ENCODE measurements at regions of chr2 and their contacts with region 1.

Region 1: GRCh38 chr2:201642579-201643215 is 606 bp downstream of the TMEM237 start:
- DNase-seq: peak; percentile 81 to 94 (median 92)
- ATAC-seq: peak; percentile 94
- H3K4me3 ChIP-seq: peak overlapping the region; percentile 95
- H3K4me3 Mint-ChIP-seq: peak overlapping the region; percentile 86 to 99 (median 96)
- H3K27ac ChIP-seq: peak overlapping the region; percentile 87
- H3K27ac Mint-ChIP-seq: peak overlapping the region; percentile 76 to 100 (median 97)
- H3K4me1 ChIP-seq: peaks cover 3 to 5% of the 10 kb centered on the region in 2 donors
- H3K4me1 Mint-ChIP-seq: peaks cover 5 to 21% (median 12%) of the 10 kb centered on the region in 7 donors
- H3K27me3 ChIP-seq: no peaks in the 10 kb centered on the region
- H3K27me3 Mint-ChIP-seq: peaks cover 0 to 4% (median 0%) of the 10 kb centered on the region in 5 donors

Region 2: DNA sequence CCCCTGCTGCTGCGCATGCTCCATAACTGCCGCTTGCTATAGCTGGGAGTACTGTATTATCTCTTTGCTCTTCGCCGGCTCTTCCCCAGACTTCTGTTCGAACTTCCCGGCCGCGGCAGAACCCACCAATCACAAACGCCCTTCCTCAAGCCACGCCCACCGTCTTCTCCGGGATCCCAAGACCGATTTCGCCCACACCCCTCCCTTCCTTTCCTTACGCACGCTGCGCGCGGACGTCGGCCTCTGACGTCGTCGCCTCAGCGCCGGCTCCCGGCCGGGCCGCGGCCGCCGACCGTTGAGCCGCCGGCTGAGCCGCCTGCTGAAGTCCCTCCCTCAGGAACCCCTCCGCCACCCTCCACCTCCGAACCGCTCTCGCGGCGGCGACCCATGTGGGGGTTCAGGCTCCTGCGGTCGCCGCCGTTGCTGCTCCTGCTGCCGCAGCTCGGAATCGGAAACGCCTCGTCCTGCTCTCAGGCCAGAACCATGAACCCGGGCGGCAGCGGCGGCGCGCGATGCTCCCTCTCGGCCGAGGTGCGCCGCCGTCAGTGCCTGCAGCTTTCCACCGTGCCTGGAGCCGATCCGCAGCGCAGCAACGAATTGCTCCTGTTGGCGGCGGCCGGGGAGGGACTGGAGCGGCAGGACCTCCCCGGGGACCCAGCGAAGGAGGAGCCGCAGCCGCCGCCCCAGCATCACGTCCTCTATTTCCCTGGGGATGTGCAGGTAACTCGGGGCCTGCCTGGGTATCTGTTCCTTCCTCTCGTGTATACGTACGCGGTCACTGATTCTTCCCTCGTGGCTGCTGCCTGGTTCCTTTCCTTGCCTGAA is 1731.4 kb before region 1 on chr2 and contains the start of gene C2orf69:
- CTCF ChIA-PET with region 1: no interaction called
- POLR2A ChIA-PET with region 1: no interaction called
- intact Hi-C with region 1: loop called in 1 of 2 experiments (anchors 10 kb)
- DNase-seq: peak; percentile 80 to 92 (median 83)
- ATAC-seq: peak; percentile 93
- H3K4me3 ChIP-seq: peak within 1 kb of the TSS; percentile 75
- H3K4me3 Mint-ChIP-seq: peak within 1 kb of the TSS; percentile 89 to 100 (median 98)
- H3K27ac ChIP-seq: peak within 1 kb of the TSS; percentile 89
- H3K27ac Mint-ChIP-seq: peak within 1 kb of the TSS; percentile 72 to 95 (median 94)
- H3K4me1 ChIP-seq: peaks cover 11 to 19% of the 10 kb centered on the region in 2 donors
- H3K4me1 Mint-ChIP-seq: peaks cover 26 to 47% (median 37%) of the 10 kb centered on the region in 7 donors
- H3K27me3 ChIP-seq: no peaks in the 10 kb centered on the region
- H3K27me3 Mint-ChIP-seq: peaks cover 0 to 14% (median 8%) of the 10 kb centered on the region in 5 donors
- total RNA-seq, gene C2orf69: 10.1 to 15.4 (median 12.7) TPM

Region 3: DNA sequence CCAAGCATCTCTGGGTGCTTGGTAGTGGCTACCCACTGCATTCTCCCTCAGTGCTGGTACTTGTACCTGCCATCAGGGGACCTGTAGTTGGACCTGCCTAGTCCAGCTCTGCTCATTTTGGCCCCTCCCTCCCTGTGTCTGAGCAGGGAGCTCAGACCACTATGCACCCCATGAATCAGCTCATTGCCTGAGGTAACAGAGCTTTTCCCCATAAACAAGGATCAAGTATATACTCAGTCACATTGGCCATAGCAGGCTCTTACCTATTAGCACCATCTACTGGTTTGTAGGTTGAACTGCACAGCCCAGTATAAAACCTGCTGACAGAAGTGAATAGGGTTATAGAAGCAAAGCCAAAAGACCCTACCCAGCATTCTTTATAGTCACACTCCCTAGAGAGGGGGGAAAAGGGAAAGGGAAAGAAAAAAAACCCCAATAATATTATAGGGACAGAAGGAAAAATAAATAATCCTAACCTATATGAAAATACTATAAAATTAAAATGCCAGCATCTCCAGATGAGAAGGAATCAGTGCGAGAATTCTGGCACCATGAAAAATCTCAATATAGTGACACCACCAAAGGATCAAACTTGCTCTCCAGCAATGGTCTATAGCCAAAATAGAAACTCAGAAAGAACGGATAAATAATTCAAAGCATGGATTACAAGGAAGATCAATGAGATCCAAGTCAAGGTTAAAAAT is 278.7 kb before region 1 on chr2:
- CTCF ChIA-PET with region 1: no interaction called
- POLR2A ChIA-PET with region 1: no interaction called
- intact Hi-C with region 1: loop called in 1 of 2 experiments (anchors 5 kb)
- DNase-seq: peak in 7 of 9 donors; percentile 21 to 64 (median 61)
- ATAC-seq: peak; percentile 96
- H3K4me3 ChIP-seq: no peak overlapping the region
- H3K4me3 Mint-ChIP-seq: peak overlapping the region in 5 of 10 donors; percentile 11 to 49 (median 32)
- H3K27ac ChIP-seq: no peak overlapping the region
- H3K27ac Mint-ChIP-seq: peak overlapping the region in 7 of 9 donors; percentile 9 to 84 (median 75)
- H3K4me1 ChIP-seq: peaks cover 0 to 24% of the 10 kb centered on the region in 2 donors
- H3K4me1 Mint-ChIP-seq: peaks cover 11 to 45% (median 41%) of the 10 kb centered on the region in 7 donors
- H3K27me3 ChIP-seq: no peaks in the 10 kb centered on the region
- H3K27me3 Mint-ChIP-seq: no peaks in the 10 kb centered on the region

Region 4: DNA sequence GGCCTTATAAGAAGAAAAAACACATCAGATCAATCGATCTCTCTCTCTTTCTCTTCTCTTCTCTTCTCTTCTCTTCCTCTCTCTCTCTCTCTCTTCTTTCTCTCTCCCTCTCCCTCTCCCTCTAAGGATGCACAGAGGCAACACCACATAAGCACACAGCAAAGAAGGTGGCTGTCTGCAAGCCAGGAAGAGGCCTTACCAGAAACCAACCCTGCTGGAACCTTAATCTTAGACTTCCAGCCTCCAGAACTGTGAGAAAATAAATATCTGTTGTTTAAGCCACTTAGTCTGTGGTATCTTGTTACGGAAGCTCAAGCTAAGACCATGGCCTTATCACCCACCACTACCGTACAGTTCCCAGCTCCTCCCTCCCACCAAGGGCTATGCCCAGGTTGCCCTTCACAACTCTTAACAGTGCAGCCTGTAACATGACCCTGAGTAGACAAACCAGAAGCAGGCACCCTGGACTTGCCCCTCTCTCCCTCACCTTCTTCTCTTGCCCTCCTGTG is 25.8 kb after region 1 on chr2:
- CTCF ChIA-PET with region 1: no interaction called
- POLR2A ChIA-PET with region 1: no interaction called
- intact Hi-C with region 1: no loop called
- DNase-seq: no peak
- ATAC-seq: no peak
- H3K4me3 ChIP-seq: no peak overlapping the region
- H3K4me3 Mint-ChIP-seq: no peak overlapping the region
- H3K27ac ChIP-seq: no peak overlapping the region
- H3K27ac Mint-ChIP-seq: peak overlapping the region in 1 of 9 donors; percentile 18
- H3K4me1 ChIP-seq: no peaks in the 10 kb centered on the region
- H3K4me1 Mint-ChIP-seq: no peaks in the 10 kb centered on the region
- H3K27me3 ChIP-seq: no peaks in the 10 kb centered on the region
- H3K27me3 Mint-ChIP-seq: peaks cover 0 to 27% (median 0%) of the 10 kb centered on the region in 5 donors

Region 5: DNA sequence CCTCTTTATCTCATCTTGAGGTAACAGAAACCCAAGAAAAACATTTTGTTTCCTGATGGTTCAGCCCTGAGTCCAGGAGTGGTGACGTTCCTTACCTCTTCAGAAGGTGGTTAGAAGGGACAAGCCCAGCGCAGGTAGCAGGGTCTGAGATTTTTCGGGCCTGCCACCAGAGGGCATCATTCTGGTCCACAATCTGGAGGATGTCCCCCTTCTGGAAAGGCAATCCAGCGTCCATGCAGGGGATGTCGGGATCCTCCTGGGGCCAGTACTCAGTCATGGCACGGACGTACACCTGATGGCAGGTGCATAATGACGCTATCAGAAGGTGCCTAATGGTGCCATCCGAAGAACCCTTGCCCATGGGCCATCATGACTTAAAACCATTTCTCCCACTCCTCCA is 38.0 kb after region 1 on chr2:
- CTCF ChIA-PET with region 1: no interaction called
- POLR2A ChIA-PET with region 1: no interaction called
- intact Hi-C with region 1: no loop called
- DNase-seq: no peak
- ATAC-seq: no peak
- H3K4me3 ChIP-seq: no peak overlapping the region
- H3K4me3 Mint-ChIP-seq: no peak overlapping the region
- H3K27ac ChIP-seq: no peak overlapping the region
- H3K27ac Mint-ChIP-seq: no peak overlapping the region
- H3K4me1 ChIP-seq: no peaks in the 10 kb centered on the region
- H3K4me1 Mint-ChIP-seq: no peaks in the 10 kb centered on the region
- H3K27me3 ChIP-seq: no peaks in the 10 kb centered on the region
- H3K27me3 Mint-ChIP-seq: peaks cover 4 to 15% (median 11%) of the 10 kb centered on the region in 5 donors

Region 6: DNA sequence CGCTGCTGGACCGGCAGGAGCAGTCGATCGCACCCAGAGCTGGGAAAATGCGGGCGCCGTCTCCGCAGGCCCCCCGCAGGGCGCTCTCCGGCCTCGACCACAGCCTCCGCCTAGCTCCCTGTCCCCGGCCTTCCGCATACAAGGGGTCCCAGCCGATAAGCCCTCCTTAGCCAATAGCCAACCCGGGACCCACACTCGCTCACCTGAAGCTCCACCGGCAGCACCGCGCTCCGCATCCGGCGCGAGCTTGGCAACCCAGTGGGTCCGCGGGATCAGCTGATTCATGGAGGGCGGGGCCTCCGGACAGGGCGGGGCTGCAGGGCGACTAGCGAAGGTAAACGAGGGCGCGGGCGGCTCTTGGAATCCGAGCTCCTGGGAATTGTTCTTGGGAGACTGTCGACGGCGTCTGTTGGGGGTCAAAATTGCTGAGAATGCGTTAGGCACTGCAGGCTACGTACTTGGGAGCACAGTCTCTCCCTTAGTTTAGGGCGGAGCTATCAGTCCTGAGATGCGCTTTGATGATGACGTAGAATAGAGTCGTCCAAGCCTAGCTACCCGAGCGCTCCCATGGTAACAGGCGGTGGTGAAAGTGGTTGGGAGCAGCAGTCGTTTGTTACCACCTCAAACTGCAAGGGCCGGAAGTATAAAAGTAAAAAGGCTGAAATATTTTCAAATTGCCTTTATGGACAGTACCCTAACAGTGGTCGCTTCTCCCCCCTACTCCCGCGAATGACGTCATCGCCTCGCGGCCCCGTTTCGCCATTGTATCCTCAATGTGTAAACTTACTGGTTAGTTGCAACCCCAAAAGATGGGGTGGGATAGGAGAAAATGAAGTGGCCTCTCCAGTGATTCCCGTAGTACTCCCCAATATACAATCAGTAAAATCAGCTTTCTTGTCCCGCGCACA is 138.2 kb after region 1 on chr2 and contains the start of gene ALS2:
- CTCF ChIA-PET with region 1: no interaction called
- POLR2A ChIA-PET with region 1: interaction called, 6 read pairs
- intact Hi-C with region 1: loop called (anchors 1 kb)
- DNase-seq: peak; percentile 91 to 97 (median 95)
- ATAC-seq: peak; percentile 96
- H3K4me3 ChIP-seq: peak within 1 kb of the TSS; percentile 96
- H3K4me3 Mint-ChIP-seq: peak within 1 kb of the TSS; percentile 87 to 99 (median 98)
- H3K27ac ChIP-seq: peak within 1 kb of the TSS; percentile 84
- H3K27ac Mint-ChIP-seq: peak within 1 kb of the TSS; percentile 84 to 99 (median 97)
- H3K4me1 ChIP-seq: peaks cover 7 to 10% of the 10 kb centered on the region in 2 donors
- H3K4me1 Mint-ChIP-seq: peaks cover 5 to 36% (median 21%) of the 10 kb centered on the region in 7 donors
- H3K27me3 ChIP-seq: no peaks in the 10 kb centered on the region
- H3K27me3 Mint-ChIP-seq: peaks cover 0 to 22% (median 0%) of the 10 kb centered on the region in 5 donors
- total RNA-seq, gene ALS2: 8.9 to 13.5 (median 10.7) TPM

Region 7: DNA sequence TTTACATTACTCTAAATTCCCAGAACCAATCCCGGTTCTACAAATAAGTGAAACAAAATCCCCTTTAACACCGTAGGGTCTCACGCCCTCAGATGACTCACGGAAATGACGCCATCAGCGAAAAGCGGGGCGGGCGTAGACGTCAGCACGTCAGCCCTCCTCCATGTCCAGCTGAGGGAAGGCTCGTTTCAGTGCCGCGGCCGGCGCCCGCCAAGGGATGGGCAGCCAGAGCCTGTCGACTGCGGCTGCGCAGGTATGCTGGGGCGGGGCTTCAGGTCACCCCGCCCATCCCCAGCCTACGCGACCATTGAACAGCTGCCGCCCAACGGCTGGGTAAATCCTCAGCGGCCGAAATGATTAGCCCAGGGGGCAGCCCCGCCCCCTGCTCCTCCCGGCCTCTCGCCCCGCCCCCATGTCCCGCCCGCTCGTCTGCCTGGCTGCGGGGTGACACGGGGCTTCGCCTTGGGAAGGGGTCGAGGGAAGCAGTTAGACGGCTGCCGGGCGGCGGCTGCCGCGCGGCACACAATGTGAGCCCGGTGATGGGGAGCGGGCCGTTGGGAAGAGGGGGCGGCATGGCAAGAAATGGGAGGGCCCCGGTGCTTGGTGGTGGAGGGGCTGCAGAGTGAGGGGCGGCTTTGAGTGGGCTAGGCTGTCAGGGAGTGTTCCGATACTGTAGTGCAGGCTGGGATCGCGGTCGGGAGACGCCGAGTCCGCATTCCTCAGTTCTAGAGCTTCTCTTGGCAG is 1371.9 kb after region 1 on chr2 and contains the start of gene NBEAL1:
- CTCF ChIA-PET with region 1: no interaction called
- POLR2A ChIA-PET with region 1: no interaction called
- intact Hi-C with region 1: loop called (anchors 2 to 5 kb)
- DNase-seq: peak; percentile 88 to 99 (median 90)
- ATAC-seq: peak; percentile 95
- H3K4me3 ChIP-seq: peak within 1 kb of the TSS; percentile 92
- H3K4me3 Mint-ChIP-seq: peak within 1 kb of the TSS; percentile 90 to 97 (median 95)
- H3K27ac ChIP-seq: peak within 1 kb of the TSS; percentile 92
- H3K27ac Mint-ChIP-seq: peak within 1 kb of the TSS; percentile 84 to 98 (median 94)
- H3K4me1 ChIP-seq: peaks cover 5 to 14% of the 10 kb centered on the region in 2 donors
- H3K4me1 Mint-ChIP-seq: peaks cover 18 to 48% (median 41%) of the 10 kb centered on the region in 7 donors
- H3K27me3 ChIP-seq: no peaks in the 10 kb centered on the region
- H3K27me3 Mint-ChIP-seq: peaks cover 0 to 19% (median 0%) of the 10 kb centered on the region in 5 donors
- total RNA-seq, gene NBEAL1: 11.6 to 15.9 (median 12.6) TPM